ENCODE measurements at regions of chr12 and their contacts with region 1.

Region 1: DNA sequence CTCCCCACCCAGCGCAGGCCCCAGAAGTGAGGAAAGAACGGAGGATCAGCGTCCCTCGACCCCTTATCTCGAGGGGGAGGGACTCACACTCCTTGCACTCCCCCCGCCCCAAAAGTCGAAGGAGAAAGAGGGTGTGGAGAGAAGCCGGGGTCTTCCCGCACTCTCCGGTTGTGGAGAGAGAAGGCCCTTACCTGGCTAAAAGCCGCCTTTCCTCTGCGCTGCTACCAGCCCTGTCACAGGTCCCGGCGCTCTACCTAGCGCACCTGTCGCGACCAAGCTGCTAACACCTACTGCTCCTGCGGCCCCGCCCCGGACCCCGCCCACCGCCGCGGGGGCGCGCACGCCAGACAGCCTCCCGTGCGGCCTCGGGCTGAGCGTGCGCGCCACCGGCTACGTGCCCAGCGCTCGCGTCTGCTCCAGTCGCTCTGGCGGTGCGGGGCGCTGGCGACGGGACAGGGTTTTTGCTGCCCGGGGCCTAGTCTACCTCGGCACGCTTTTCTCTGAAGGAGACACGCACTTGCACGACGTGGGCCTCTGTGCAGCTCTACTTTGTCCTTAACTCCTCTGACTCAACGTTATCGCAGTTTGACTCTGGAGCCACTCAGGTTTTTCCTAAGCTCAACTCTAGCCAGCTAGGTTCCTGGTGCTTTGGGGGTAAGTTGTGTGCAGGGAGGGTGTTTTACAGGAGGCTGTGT is at the start of gene LIMA1:
- DNase-seq: peak; percentile 84
- total RNA-seq, gene LIMA1: 22.0 and 25.7 TPM in 2 replicates

Region 2: GRCh38 chr12:50111693-50112455 is 171.5 kb before region 1 on chr12 and contains the start of gene COX14:
- in situ Hi-C with region 1: loop called (anchors 10 kb)
- DNase-seq: peak; percentile 100
- total RNA-seq, gene COX14: 74.0 and 127 TPM in 2 replicates